ENCODE measurements at regions of chr15 and their contacts with region 1.

Region 1: GRCh38 chr15:85840065-85840801 is 45.5 kb upstream of the KLHL25 start:
- DNase-seq: peak; percentile 93 to 96
- H3K4me3 ChIP-seq: peak overlapping the region; percentile 23; the same call in 1 of the 2 replicates
- H3K4me3 Mint-ChIP-seq: peak overlapping the region; percentile 67
- H3K27ac Mint-ChIP-seq: peak overlapping the region; percentile 86
- H3K4me1 ChIP-seq: peaks cover 30% of the 10 kb centered on the region
- H3K4me1 Mint-ChIP-seq: peaks cover 34% of the 10 kb centered on the region
- H3K27me3 ChIP-seq: no peaks in the 10 kb centered on the region
- H3K27me3 Mint-ChIP-seq: no peaks in the 10 kb centered on the region
- CTCF ChIP-seq: peak; percentile 86 to 93

Region 2: GRCh38 chr15:85494048-85494793 is 346.0 kb before region 1 on chr15:
- CTCF ChIA-PET with region 1: no interaction called
- POLR2A ChIA-PET with region 1: no interaction called
- intact Hi-C with region 1: loop called (anchors 5 kb)
- DNase-seq: no peak
- H3K4me3 ChIP-seq: no peak overlapping the region
- H3K4me3 Mint-ChIP-seq: no peak overlapping the region
- H3K27ac Mint-ChIP-seq: peak overlapping the region; percentile 23
- H3K4me1 ChIP-seq: peaks cover 31% of the 10 kb centered on the region
- H3K4me1 Mint-ChIP-seq: peaks cover 39% of the 10 kb centered on the region
- H3K27me3 ChIP-seq: no peaks in the 10 kb centered on the region
- H3K27me3 Mint-ChIP-seq: no peaks in the 10 kb centered on the region
- CTCF ChIP-seq: no peak

Region 3: GRCh38 chr15:85794603-85795336 is 45.5 kb before region 1 on chr15 and contains the start of gene KLHL25:
- CTCF ChIA-PET with region 1: interaction called, 10 read pairs
- POLR2A ChIA-PET with region 1: no interaction called
- intact Hi-C with region 1: loop called (anchors 1 kb)
- DNase-seq: peak; percentile 94 to 95
- H3K4me3 ChIP-seq: peak within 1 kb of the TSS; percentile 83
- H3K4me3 Mint-ChIP-seq: peak within 1 kb of the TSS; percentile 76
- H3K27ac Mint-ChIP-seq: peak within 1 kb of the TSS; percentile 69
- H3K4me1 ChIP-seq: peaks cover 7% of the 10 kb centered on the region
- H3K4me1 Mint-ChIP-seq: peaks cover 22% of the 10 kb centered on the region
- H3K27me3 ChIP-seq: no peaks in the 10 kb centered on the region
- H3K27me3 Mint-ChIP-seq: no peaks in the 10 kb centered on the region
- CTCF ChIP-seq: no peak
- total RNA-seq, gene KLHL25: 15.4 and 16.0 TPM in 2 replicates

Region 4: DNA sequence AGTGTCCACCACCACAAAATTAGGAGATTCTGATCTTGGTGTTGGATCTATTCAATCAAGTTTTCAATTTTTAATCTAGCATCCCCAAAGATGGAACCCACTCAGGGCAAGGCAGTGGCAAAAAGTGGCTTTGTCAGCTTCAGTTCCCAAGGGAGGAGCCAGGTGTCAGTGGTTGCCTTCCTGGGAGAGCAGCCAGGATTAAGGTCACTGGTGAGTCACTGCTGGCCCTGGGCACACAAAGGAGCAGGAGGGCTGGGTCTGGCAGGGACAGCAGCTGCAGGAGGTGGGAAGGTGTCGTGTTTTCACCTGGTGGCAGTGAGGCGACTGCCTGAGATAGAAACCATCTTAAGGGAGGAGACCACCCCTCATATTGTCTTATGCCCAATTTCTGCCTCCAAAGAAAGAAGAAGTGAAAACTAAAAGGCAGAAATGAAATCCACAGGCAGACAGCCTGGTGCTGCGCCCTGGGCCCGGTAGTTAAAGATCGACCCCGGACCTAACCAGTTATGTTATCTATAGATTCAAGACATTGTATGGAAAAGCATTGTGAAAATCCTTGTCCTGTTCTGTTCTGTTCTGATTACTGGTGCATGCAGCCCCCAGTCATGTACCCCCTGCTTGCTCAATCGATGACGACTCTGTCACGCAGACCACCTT is 39.6 kb before region 1 on chr15:
- CTCF ChIA-PET with region 1: interaction called, 21 read pairs
- POLR2A ChIA-PET with region 1: no interaction called
- intact Hi-C with region 1: loop called (anchors 1 kb)
- DNase-seq: peak; percentile 80 to 84
- H3K4me3 ChIP-seq: no peak overlapping the region
- H3K4me3 Mint-ChIP-seq: peak overlapping the region; percentile 20
- H3K27ac Mint-ChIP-seq: peak overlapping the region; percentile 78
- H3K4me1 ChIP-seq: peaks cover 21% of the 10 kb centered on the region
- H3K4me1 Mint-ChIP-seq: peaks cover 17% of the 10 kb centered on the region
- H3K27me3 ChIP-seq: no peaks in the 10 kb centered on the region
- H3K27me3 Mint-ChIP-seq: no peaks in the 10 kb centered on the region
- CTCF ChIP-seq: peak; percentile 27 to 75